Mammary epithelial cell (primary cell): ENCODE measurements at regions of chr4 and their contacts with region 1.

Region 1: GRCh38 chr4:108919226-108919893 is 156.5 kb upstream of the ETNPPL start:
- DNase-seq: no peak
- H3K4me3 ChIP-seq: no peak overlapping the region
- H3K27ac ChIP-seq: no peak overlapping the region
- H3K4me1 ChIP-seq: no peaks in the 10 kb centered on the region
- H3K27me3 ChIP-seq: peaks cover 2% of the 10 kb centered on the region
- CTCF ChIP-seq: no peak

Region 2: GRCh38 chr4:108345862-108346817 is 573.2 kb before region 1 on chr4:
- CTCF ChIA-PET with region 1: no interaction called
- dilution Hi-C with region 1: no loop called
- in situ Hi-C with region 1: no loop called
- intact Hi-C with region 1: no loop called
- DNase-seq: peak; percentile 59
- H3K4me3 ChIP-seq: no peak overlapping the region
- H3K27ac ChIP-seq: no peak overlapping the region
- H3K4me1 ChIP-seq: peaks cover 11% of the 10 kb centered on the region
- H3K27me3 ChIP-seq: no peaks in the 10 kb centered on the region
- CTCF ChIP-seq: no peak

Region 3: DNA sequence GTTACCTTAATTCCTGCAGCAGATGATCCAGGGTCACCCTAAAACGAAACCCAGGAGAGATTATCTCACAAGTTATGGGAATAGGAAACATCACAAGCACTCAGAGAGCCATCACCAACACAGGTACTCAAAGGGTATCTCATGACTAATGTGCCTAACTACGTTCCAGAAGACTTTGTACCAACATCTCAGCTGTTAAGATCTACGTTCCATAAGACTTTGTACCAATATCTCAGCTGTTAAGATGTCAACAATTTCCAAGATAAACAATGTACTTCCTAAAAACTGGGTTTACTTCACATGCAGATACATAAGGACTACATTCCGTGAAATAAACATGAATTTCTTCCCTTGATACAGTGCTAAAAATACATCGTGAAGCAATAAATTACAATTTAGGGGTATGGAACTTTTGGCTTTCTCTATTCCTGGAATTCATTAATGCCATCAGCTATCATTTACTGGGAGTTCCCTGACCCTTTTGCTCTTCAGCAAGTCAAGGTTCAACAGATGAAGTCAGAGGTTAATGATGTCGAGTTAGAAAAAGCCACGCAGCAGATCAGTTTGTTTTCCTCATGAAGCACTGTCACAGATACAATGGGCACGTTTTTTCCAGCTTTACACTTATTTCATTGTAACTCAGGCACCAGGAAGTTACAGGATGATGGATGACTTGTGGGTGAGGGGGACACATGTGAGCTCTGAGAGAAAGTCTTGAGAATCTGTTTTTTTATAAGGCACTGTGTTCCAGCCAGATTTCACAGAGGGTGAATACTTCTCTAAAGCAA is 29.5 kb before region 1 on chr4:
- CTCF ChIA-PET with region 1: interaction called, 13 read pairs
- dilution Hi-C with region 1: no loop called
- in situ Hi-C with region 1: no loop called
- intact Hi-C with region 1: no loop called
- DNase-seq: no peak
- H3K4me3 ChIP-seq: no peak overlapping the region
- H3K27ac ChIP-seq: no peak overlapping the region
- H3K4me1 ChIP-seq: no peaks in the 10 kb centered on the region
- H3K27me3 ChIP-seq: peaks cover 2% of the 10 kb centered on the region
- CTCF ChIP-seq: no peak